ENCODE measurements at regions of chr20 and their contacts with region 1.

Region 1: GRCh38 chr20:38210741-38211140 is 45.7 kb upstream of the TGM2 start:
- DNase-seq: peak in 1 of 2 donors; percentile 68
- ATAC-seq: peak; percentile 3
- H3K4me3 ChIP-seq: no peak overlapping the region
- H3K27ac ChIP-seq: peak overlapping the region in 1 of 2 donors; percentile 32
- H3K4me1 ChIP-seq: no peaks in the 10 kb centered on the region
- H3K27me3 ChIP-seq: no peaks in the 10 kb centered on the region

Region 2: GRCh38 chr20:38190936-38191371 is 19.8 kb before region 1 on chr20:
- intact Hi-C with region 1: loop called in 1 of 2 experiments (anchors 2 kb)
- DNase-seq: peak; percentile 70 to 91
- ATAC-seq: peak; percentile 81
- H3K4me3 ChIP-seq: no peak overlapping the region
- H3K27ac ChIP-seq: peak overlapping the region in 1 of 2 donors; percentile 74
- H3K4me1 ChIP-seq: peaks cover 0 to 4% of the 10 kb centered on the region in 2 donors
- H3K27me3 ChIP-seq: no peaks in the 10 kb centered on the region